ENCODE measurements at regions of chr13 and their contacts with region 1.

Region 1: DNA sequence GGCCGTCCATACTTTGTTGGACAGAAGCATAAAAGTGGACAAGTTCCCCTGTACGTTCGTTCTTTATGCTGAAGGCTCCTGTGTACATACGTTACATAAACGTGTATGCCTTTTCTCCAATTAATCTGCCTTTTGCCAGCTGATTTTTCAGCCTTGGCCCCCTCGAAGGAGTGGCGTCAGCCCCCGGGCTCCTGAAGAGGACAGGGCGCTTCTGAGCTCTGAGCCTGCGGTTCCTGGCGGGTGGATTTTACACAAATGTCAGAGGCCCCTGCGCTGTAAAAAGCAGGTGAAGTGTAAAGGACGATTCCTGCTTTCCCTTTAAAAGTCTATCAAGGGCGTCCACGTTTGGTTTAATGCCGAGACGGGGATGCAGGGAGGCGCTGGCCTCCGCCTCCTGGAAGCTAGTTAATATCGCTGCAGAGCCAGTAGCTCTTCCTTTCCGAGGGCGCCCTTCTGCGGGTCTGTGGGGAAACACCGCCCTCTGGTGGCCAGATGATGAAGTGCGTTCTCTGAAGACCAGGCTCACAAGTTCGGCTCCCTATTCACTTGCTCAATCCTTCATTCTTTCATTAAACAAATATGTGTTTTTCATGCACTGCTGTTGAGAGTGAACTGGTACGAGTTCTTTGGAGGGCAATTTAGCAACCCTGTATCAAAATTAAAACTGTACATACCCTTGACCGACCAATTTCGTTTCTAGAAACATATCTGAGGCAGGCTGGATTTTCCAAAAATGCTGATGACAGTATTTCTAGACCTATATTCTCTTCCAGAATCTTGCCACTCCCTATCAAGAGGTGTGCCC is 62.0 kb downstream of the GPR12 start:
- DNase-seq: peak; percentile 73
- H3K4me3 ChIP-seq: peak overlapping the region; percentile 20; the same call in 1 of the 2 replicates
- H3K27ac ChIP-seq: no peak overlapping the region
- H3K27me3 ChIP-seq: peaks cover 3% of the 10 kb centered on the region
- CTCF ChIP-seq: peak; percentile 96

Region 2: DNA sequence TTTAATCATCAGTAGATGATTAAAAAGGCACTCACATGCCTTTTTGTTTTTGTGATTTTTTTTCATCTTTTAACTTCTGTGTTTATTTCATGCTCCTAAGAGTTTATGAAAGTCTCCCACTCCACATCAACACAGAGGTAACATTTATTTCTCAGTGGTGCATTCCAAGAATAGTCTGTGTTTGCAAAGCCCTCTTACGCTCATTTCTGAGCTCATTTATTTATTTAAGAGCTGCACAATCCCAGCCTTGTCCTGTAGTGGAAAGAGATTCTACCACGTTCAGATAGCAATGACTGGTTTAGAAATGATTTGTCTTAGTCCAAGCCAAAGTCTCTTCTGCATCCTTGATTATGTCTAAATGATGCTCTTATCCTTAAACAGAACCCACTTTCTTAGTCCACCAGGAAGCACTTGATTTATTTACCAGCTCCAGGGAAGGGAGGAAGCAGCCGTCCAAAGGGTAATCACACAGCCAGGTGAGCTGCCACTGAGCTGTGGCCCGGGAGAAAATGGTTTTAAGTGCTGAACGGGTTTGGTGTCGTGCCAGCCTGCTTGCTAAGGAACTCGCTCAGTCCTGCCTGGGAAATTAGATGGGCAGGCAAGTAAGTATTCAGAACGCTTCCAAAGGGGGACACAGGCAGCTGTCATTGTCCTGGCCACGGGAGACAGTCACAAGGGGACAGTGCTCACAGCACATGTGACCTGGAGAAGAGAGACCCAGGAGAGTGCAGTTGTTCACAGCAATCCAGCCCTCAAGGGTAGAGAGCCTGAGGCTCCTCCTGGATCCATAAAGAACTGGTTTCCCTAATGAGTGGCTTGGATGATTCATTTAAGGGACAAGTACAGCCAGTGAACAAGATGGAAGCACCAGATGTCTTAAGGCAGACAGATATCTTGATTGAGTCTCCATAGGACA is 272.9 kb before region 1 on chr13:
- CTCF ChIA-PET with region 1: interaction called, 13 read pairs
- POLR2A ChIA-PET with region 1: no interaction called
- DNase-seq: peak; percentile 37
- H3K4me3 ChIP-seq: no peak overlapping the region
- H3K27ac ChIP-seq: peak overlapping the region; percentile 34
- H3K27me3 ChIP-seq: no peaks in the 10 kb centered on the region
- CTCF ChIP-seq: no peak

Region 3: GRCh38 chr13:26494571-26495195 is 203.9 kb before region 1 on chr13:
- CTCF ChIA-PET with region 1: interaction called, 46 read pairs
- POLR2A ChIA-PET with region 1: no interaction called
- DNase-seq: no peak
- H3K4me3 ChIP-seq: no peak overlapping the region
- H3K27ac ChIP-seq: no peak overlapping the region
- H3K27me3 ChIP-seq: peaks cover 14% of the 10 kb centered on the region
- CTCF ChIP-seq: no peak

Region 4: GRCh38 chr13:26529441-26529840 is 169.2 kb before region 1 on chr13:
- CTCF ChIA-PET with region 1: interaction called, 11 read pairs
- POLR2A ChIA-PET with region 1: no interaction called
- DNase-seq: peak; percentile 26
- H3K4me3 ChIP-seq: no peak overlapping the region
- H3K27ac ChIP-seq: no peak overlapping the region
- H3K27me3 ChIP-seq: no peaks in the 10 kb centered on the region
- CTCF ChIP-seq: no peak

Region 5: DNA sequence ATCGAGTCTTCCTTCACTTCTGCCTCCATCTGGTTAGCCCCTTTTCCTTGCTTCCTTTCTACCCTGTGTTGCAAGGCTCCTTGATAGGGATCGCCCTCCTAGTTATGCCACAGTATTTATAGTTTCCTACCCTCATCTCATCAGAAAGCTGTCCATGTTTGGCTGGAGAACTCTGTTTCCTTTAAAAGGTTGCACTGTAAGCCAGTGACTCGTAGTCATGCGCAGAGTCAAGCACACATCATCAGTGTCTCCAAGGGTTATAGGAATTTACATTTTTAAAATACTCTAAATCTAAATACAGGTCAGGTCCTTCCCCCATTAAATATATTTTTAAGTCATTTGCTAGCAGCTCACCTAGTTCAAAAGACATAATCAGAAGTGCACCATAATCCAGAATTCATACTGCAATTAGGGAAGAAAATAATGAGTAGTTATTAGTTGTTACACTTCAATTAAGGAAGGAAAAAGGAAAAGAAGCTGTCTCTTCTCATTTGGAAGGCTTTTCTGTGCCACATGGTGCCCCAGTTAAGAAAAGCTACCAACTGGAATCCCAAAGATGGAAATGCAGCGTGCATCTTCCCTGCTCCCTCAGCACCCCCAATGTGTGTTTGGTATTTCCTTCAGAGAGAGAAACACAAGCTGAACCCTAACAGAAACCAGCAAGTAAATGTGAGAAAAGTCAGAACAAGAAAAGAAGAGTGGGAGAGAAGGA is 19.0 kb before region 1 on chr13:
- CTCF ChIA-PET with region 1: interaction called, 56 read pairs
- POLR2A ChIA-PET with region 1: no interaction called
- DNase-seq: peak; percentile 24
- H3K4me3 ChIP-seq: no peak overlapping the region
- H3K27ac ChIP-seq: peak overlapping the region; percentile 58
- H3K27me3 ChIP-seq: no peaks in the 10 kb centered on the region
- CTCF ChIP-seq: no peak

Region 6: DNA sequence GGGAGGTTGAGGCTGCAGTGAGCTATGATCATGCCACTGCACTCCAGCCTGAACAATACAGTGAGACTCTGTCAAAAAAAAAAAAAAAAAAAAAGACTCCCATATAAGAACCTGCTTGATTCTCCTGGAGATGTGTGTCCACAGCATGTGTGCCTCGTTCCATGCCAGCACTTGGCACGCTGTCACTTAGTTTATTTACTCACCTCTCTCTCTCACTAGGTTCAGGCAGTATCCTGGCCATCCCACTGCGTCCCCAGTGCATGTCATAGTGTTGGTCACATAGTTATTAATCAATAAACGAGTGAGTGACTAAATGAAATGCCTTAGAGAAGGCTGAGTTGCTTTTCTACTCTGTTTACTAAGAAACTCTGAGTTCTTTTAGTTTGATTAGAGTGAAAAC is 141.1 kb after region 1 on chr13:
- CTCF ChIA-PET with region 1: no interaction called
- POLR2A ChIA-PET with region 1: no interaction called
- DNase-seq: no peak
- H3K4me3 ChIP-seq: no peak overlapping the region
- H3K27ac ChIP-seq: no peak overlapping the region
- H3K27me3 ChIP-seq: no peaks in the 10 kb centered on the region
- CTCF ChIP-seq: no peak

Region 7: DNA sequence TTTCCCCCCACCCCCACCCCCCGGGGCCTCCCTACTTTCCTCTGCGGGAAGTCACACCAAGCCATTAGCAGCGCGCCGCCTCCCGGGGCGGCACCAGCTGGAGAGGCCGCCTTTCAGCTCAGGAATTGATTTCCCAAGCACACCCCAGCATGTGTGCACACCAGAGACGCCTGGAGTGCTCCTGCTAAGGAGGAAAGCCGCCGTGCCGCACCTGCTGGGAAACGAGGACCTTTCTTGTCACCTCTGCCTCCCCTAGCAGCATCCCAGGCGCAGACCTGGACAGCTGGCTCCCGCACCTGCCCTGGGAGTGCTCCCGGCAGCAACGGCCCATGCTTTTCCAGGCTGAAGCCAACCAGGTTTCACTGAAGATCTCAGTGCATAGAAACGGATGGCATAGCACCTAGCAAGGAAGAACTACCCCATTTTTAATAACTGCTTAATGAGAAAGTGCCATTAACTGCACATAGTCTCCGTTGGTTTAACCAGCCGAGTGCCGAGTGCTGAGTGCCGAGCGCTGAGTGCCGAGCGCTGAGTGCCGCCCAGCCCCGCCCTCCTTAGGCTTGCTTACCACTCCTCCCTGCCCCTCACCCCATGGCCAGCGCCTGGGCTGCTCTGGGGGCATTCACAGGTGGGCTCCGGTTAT is 308.0 kb after region 1 on chr13:
- CTCF ChIA-PET with region 1: no interaction called
- POLR2A ChIA-PET with region 1: no interaction called
- DNase-seq: no peak
- H3K4me3 ChIP-seq: peak overlapping the region; percentile 48
- H3K27ac ChIP-seq: no peak overlapping the region
- H3K27me3 ChIP-seq: peaks cover 12% of the 10 kb centered on the region
- CTCF ChIP-seq: no peak